ENCODE measurements at regions of chr2 and their contacts with region 1.

Region 1: DNA sequence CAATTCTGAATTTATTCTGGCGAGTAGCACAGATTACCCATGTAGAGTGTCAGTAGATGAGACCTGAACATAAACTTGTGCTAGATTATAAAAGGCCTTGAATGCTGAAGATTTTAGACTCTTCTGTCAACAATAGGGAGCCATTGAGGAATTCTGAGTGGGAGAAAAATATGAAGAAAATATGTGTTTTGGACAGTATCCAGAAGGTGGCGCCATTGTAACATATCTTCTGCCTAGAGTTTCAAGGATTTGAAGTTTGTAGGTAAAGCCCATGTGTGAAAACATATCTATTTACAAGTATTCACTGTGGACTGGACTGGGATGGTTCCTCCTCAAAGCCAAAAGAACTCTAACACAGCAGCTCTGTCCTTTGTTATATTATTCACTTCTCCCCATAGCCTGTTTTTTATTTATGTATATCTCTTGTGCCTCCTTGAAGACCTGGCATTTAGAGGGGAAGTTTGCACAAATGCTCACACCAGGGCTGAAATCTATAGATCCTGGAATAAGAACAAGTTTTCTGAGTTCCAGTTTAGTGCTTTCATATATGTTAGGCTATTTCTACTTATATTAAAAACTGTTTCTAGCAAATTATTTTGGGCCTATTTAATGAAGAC is 124.9 kb downstream of the RDH14 start:
- DNase-seq: no peak
- ATAC-seq: peak; percentile 72
- H3K4me3 ChIP-seq: no peak overlapping the region
- H3K27ac ChIP-seq: no peak overlapping the region
- H3K4me1 ChIP-seq: peaks cover 0 to 2% of the 10 kb centered on the region in 2 donors
- H3K27me3 ChIP-seq: no peaks in the 10 kb centered on the region

Region 2: DNA sequence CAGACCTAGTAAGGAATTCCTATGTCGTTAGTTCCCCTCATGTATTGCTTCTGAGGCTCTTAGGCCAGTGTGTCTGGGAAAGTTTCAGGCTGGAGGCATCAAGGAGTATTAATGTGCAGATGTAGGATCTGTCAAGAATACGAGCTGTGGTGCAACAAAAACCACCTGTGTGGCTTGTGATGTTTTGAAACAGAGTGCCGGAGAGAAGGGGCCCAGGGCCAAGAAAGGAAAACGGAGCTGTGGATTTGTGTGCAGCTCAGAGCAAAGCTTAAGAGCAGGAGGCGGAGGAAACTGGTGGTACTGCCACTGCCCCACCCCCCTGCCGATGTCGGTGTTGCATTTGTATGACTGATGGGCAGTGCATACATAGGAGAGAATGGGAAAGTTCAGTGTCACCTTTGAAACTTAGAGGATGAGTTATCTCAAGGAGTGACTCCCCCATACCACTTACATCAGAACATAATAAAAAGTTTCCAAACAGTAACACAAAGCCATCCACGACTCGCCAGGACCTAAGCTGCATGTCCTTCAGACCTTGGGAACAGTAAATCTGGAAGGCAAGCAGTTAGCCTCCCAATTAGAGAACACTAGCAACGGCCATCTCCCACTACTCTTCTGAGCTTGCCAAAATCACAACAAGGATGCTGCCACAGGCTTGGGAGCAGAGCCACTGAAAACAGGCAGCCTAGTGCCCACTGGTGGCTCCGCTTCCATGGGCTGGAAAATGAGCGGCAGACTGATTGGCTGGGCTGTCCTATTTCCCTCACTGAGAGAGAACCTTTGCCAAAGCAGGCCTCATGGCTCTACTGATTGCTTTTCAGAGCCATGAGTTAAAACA is 306.6 kb after region 1 on chr2:
- intact Hi-C with region 1: loop called (anchors 5 to 10 kb)
- DNase-seq: peak; percentile 65 to 78
- ATAC-seq: peak; percentile 64
- H3K4me3 ChIP-seq: no peak overlapping the region
- H3K27ac ChIP-seq: no peak overlapping the region
- H3K4me1 ChIP-seq: no peaks in the 10 kb centered on the region
- H3K27me3 ChIP-seq: no peaks in the 10 kb centered on the region

Region 3: GRCh38 chr2:18749912-18750526 is 314.5 kb after region 1 on chr2:
- intact Hi-C with region 1: loop called in 1 of 2 experiments (anchors 10 kb)
- DNase-seq: peak; percentile 56 to 68
- ATAC-seq: peak; percentile 82
- H3K4me3 ChIP-seq: no peak overlapping the region
- H3K27ac ChIP-seq: no peak overlapping the region
- H3K4me1 ChIP-seq: peaks cover 0 to 2% of the 10 kb centered on the region in 2 donors
- H3K27me3 ChIP-seq: no peaks in the 10 kb centered on the region